ENCODE measurements at regions of chr4 and their contacts with region 1.

Region 1: GRCh38 chr4:15457406-15458201 is 12.1 kb upstream of the CC2D2A start:
- DNase-seq: no peak
- H3K4me3 Mint-ChIP-seq: no peak overlapping the region
- H3K27ac Mint-ChIP-seq: no peak overlapping the region
- H3K4me1 Mint-ChIP-seq: no peaks in the 10 kb centered on the region
- H3K27me3 Mint-ChIP-seq: peaks cover 3% of the 10 kb centered on the region

Region 2: GRCh38 chr4:15231265-15232091 is 226.1 kb before region 1 on chr4:
- CTCF ChIA-PET with region 1: interaction called, 50 read pairs
- POLR2A ChIA-PET with region 1: no interaction called
- intact Hi-C with region 1: loop called (anchors 1 kb)
- DNase-seq: peak; percentile 81
- H3K4me3 Mint-ChIP-seq: no peak overlapping the region
- H3K27ac Mint-ChIP-seq: no peak overlapping the region
- H3K4me1 Mint-ChIP-seq: peaks cover 28% of the 10 kb centered on the region
- H3K27me3 Mint-ChIP-seq: no peaks in the 10 kb centered on the region

Region 3: DNA sequence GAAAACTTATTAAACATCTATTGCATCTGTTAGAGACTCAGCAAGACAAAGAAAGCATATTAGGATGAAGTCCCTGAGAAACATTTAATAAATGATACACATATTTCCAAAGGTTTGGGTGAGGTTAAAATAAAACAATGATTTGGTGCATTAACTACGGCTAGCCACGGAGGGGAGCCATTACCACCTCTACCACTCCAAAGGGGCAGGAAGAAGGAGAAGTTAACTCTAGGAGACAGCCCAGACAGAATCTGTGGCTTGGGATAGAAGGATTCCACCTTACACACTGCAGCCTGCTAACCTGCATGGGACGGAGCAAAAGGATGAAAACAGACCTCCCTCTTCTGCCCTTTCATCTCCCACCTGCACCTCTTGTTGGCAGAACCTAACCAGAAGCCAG is 218.9 kb before region 1 on chr4:
- CTCF ChIA-PET with region 1: interaction called, 50 read pairs
- POLR2A ChIA-PET with region 1: no interaction called
- intact Hi-C with region 1: loop called (anchors 1 kb)
- DNase-seq: peak; percentile 50
- H3K4me3 Mint-ChIP-seq: no peak overlapping the region
- H3K27ac Mint-ChIP-seq: no peak overlapping the region
- H3K4me1 Mint-ChIP-seq: peaks cover 11% of the 10 kb centered on the region
- H3K27me3 Mint-ChIP-seq: no peaks in the 10 kb centered on the region

Region 4: GRCh38 chr4:15444872-15445547 is 12.6 kb before region 1 on chr4:
- CTCF ChIA-PET with region 1: interaction called, 10 read pairs
- POLR2A ChIA-PET with region 1: no interaction called
- intact Hi-C with region 1: no loop called
- DNase-seq: no peak
- H3K4me3 Mint-ChIP-seq: no peak overlapping the region
- H3K27ac Mint-ChIP-seq: no peak overlapping the region
- H3K4me1 Mint-ChIP-seq: no peaks in the 10 kb centered on the region
- H3K27me3 Mint-ChIP-seq: no peaks in the 10 kb centered on the region

Region 5: GRCh38 chr4:15469402-15470127 is 12.0 kb after region 1 on chr4 and contains the start of gene CC2D2A:
- CTCF ChIA-PET with region 1: interaction called, 31 read pairs
- POLR2A ChIA-PET with region 1: interaction called, 3 read pairs
- intact Hi-C with region 1: no loop called
- DNase-seq: no peak
- H3K4me3 Mint-ChIP-seq: no peak within 1 kb of the TSS
- H3K27ac Mint-ChIP-seq: no peak within 1 kb of the TSS
- H3K4me1 Mint-ChIP-seq: peaks cover 15% of the 10 kb centered on the region
- H3K27me3 Mint-ChIP-seq: peaks cover 2% of the 10 kb centered on the region
- total RNA-seq, gene CC2D2A: not detected

Region 6: DNA sequence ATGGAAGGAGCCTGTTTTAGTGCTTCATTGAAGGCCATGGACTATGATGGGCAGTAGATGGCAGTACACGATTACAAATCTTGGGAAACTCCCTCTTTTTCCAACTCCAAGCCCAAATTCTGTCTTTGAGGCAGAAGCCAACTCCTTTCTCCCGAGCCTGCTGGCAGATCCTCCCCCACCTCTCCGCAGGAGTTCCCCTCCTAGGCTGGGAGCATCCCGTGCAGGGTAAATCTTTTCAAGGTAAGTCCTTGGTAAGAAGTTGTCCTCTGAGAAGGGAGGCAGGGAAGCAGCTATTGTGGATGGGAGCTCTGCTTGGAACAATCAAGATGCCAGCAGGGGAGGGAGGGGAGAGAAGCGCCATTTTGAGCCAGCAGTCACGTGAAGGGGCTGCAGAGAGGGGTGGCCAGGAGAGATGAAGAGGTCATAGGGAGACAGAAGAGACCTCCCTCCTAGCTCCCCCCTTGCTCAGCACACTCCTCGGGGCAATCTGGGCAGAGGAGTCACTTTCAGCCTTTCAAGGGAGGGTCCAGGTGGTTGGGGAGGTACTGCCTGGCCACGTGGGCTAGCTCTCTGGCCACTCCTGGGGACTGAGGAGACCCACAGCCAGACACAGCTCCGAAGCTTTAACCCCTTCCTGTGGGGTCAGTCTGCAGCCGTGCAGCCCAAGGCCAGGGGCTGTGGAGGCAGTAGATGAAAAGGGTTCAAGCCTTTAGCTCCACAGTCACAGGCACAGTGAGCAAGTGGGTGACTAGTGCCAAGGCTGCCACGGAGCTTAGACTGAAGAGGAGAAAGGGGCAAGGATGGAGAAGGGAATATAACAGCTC is 21.7 kb after region 1 on chr4:
- CTCF ChIA-PET with region 1: interaction called, 12 read pairs
- POLR2A ChIA-PET with region 1: no interaction called
- intact Hi-C with region 1: no loop called
- DNase-seq: no peak
- H3K4me3 Mint-ChIP-seq: no peak overlapping the region
- H3K27ac Mint-ChIP-seq: no peak overlapping the region
- H3K4me1 Mint-ChIP-seq: no peaks in the 10 kb centered on the region
- H3K27me3 Mint-ChIP-seq: no peaks in the 10 kb centered on the region

Region 7: DNA sequence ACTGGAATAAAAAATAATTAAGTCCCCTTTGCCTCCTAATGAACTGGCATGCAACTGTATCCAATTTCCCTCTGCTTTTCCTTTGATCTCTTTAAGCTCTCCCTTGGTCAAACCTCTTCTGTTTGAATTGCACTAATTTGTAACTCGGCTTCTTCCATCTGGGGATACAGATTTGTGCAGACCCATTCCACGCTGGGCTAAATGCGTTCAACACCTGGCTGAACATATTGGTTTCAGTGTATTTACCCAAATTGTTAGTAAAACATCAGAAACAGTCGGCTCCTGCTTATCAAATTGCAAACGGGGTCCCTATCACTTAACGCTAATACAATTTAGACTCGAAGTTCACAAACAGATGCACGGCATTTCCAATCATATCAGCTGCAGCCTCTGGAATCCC is 893.6 kb after region 1 on chr4:
- CTCF ChIA-PET with region 1: no interaction called
- POLR2A ChIA-PET with region 1: no interaction called
- intact Hi-C with region 1: no loop called
- DNase-seq: no peak
- H3K4me3 Mint-ChIP-seq: no peak overlapping the region
- H3K27ac Mint-ChIP-seq: no peak overlapping the region
- H3K4me1 Mint-ChIP-seq: no peaks in the 10 kb centered on the region
- H3K27me3 Mint-ChIP-seq: peaks cover 15% of the 10 kb centered on the region

Measured in activated CD4-positive, alpha-beta memory T cell treated with anti-CD3 and anti-CD28 coated beads for 36 hours (primary cell).